Activated naive CD4-positive, alpha-beta T cell treated with anti-CD3 and anti-CD28 coated beads for 36 hours (primary cell): ENCODE measurements at regions of chr6 and their contacts with region 1.

Region 1: GRCh38 chr6:137641474-137642077 is 147.4 kb upstream of the OLIG3 start:
- DNase-seq: peak; percentile 84
- H3K4me3 Mint-ChIP-seq: no peak overlapping the region
- H3K27ac Mint-ChIP-seq: no peak overlapping the region
- H3K4me1 Mint-ChIP-seq: peaks cover 13% of the 10 kb centered on the region
- H3K27me3 Mint-ChIP-seq: no peaks in the 10 kb centered on the region

Region 2: GRCh38 chr6:136846046-136846445 is 795.5 kb before region 1 on chr6:
- CTCF ChIA-PET with region 1: no interaction called
- intact Hi-C with region 1: loop called (anchors 5 kb)
- DNase-seq: peak; percentile 52
- H3K4me3 Mint-ChIP-seq: no peak overlapping the region
- H3K27ac Mint-ChIP-seq: no peak overlapping the region
- H3K4me1 Mint-ChIP-seq: no peaks in the 10 kb centered on the region
- H3K27me3 Mint-ChIP-seq: no peaks in the 10 kb centered on the region

Region 3: DNA sequence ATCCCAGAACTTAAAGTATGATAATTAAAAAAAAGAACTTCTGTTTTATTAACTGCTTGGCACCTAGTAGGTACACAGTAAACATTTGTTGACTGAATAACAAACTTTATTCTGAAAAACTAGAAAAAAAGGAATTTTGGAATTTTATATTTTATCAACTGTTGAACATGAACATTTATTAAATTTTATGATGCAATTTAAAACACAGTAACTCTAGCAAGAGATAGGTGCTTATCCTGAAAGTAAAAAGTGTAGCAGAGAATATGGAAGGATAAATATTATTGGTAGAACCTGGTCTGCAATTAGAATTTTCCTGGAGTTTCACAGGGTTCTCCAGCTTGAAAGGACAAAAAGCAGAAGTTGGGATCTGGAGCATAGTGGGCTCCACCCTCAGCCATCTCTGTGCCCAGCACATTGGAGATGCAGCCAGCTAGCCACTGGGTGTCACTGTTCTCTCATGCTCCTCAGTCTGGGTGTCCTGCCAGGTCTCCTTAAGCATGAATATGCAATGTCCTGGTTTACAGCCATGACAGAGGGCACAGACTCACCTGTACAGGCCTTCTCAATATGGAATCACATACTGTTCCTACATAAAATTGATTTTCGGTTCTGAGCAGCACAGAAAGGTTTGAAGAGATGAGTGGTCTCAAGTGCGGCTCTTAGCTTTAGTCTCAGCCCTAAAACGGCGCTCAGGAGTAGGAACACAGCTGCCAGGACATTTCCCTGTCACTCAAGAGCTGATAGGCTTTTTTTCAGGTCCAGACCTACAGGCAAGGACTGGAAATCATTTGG is 565.1 kb before region 1 on chr6:
- CTCF ChIA-PET with region 1: no interaction called
- intact Hi-C with region 1: loop called (anchors 1 kb)
- DNase-seq: peak; percentile 79
- H3K4me3 Mint-ChIP-seq: no peak overlapping the region
- H3K27ac Mint-ChIP-seq: no peak overlapping the region
- H3K4me1 Mint-ChIP-seq: no peaks in the 10 kb centered on the region
- H3K27me3 Mint-ChIP-seq: peaks cover 20% of the 10 kb centered on the region

Region 4: GRCh38 chr6:137155830-137156229 is 485.7 kb before region 1 on chr6:
- CTCF ChIA-PET with region 1: no interaction called
- intact Hi-C with region 1: loop called (anchors 1 kb)
- DNase-seq: peak; percentile 68
- H3K4me3 Mint-ChIP-seq: no peak overlapping the region
- H3K27ac Mint-ChIP-seq: peak overlapping the region; percentile 60
- H3K4me1 Mint-ChIP-seq: peaks cover 16% of the 10 kb centered on the region
- H3K27me3 Mint-ChIP-seq: peaks cover 13% of the 10 kb centered on the region

Region 5: GRCh38 chr6:137313928-137314855 is 327.4 kb before region 1 on chr6:
- CTCF ChIA-PET with region 1: no interaction called
- intact Hi-C with region 1: loop called (anchors 1 kb)
- DNase-seq: peak; percentile 84
- H3K4me3 Mint-ChIP-seq: no peak overlapping the region
- H3K27ac Mint-ChIP-seq: no peak overlapping the region
- H3K4me1 Mint-ChIP-seq: peaks cover 2% of the 10 kb centered on the region
- H3K27me3 Mint-ChIP-seq: no peaks in the 10 kb centered on the region

Region 6: DNA sequence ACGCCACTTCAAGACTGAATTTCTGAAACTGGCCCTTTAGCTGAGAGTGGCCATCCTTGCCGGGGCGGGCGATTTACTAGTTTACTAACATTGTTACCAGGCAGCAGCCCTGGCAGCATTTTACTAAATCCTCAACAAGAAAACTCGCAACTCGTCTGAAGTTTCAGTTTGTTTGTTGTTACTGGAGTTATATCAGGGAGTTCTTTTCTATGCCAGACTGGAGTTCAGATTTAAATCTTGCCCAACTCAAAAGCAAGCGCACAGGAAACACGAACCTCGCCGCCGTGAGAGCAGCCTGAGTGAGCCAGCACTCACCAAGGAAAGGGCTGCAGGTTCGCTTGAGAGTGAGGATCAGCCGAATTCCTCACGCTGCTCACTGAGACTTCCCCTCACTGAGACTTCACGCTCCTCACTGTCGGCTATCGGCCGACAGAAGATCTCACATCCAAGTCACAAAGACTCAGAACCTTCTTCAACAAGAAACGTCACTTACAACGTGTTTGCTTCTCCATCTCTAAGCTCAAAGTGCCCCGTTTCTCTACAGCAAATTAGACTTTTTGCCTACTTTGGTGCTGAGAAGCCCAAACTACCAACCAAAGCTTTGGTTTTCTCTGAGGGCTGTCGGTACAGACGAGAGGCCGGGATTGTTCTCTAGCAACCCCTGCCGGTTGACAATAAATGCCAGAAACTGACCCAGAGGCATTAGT is 226.3 kb before region 1 on chr6:
- CTCF ChIA-PET with region 1: interaction called, 3 read pairs
- intact Hi-C with region 1: loop called (anchors 1 kb)
- DNase-seq: peak; percentile 80
- H3K4me3 Mint-ChIP-seq: peak overlapping the region; percentile 65
- H3K27ac Mint-ChIP-seq: no peak overlapping the region
- H3K4me1 Mint-ChIP-seq: peaks cover 11% of the 10 kb centered on the region
- H3K27me3 Mint-ChIP-seq: no peaks in the 10 kb centered on the region

Region 7: DNA sequence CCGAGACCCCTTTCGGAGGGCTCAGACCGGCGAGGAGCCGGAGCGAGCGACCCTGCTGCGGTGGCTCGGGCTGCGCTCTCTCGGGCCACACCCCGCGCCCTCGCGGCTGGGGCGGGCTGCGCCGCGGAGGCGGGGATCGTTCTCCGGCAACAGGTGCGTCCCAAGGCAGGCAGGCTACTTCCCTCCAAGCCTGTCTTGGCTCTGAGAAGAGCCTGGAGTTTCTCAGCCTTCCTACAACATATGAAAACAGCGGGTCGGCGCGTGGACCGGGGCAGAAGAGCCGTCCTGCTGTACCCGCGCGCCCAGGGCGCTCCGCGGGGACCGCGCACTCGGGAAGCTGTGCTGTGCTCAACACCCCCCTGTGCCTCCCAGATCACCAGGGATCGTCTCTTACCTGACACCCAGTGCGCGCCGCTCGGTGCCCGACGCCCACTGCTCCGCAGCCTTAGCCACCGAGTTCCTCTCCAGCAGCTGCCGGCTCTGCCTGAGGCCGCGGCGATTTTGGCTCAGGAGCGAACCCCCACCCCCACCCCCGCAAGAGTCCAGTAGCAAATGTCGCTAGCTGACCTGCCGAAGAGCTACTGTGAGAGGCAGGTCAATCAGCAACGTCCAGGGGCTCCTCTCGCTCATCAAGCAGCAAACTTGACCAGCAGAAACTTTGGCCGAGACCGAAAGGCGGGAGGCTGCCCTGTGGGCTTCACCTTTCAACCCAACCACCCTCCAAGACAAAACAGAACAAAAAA is 143.7 kb before region 1 on chr6:
- CTCF ChIA-PET with region 1: no interaction called
- intact Hi-C with region 1: loop called (anchors 5 kb)
- DNase-seq: no peak
- H3K4me3 Mint-ChIP-seq: peak overlapping the region; percentile 68
- H3K27ac Mint-ChIP-seq: no peak overlapping the region
- H3K4me1 Mint-ChIP-seq: peaks cover 46% of the 10 kb centered on the region
- H3K27me3 Mint-ChIP-seq: peaks cover 63% of the 10 kb centered on the region